Naive thymus-derived CD8-positive, alpha-beta T cell (primary cell): ENCODE measurements at regions of chr1 and their contacts with region 1.

Region 1: GRCh38 chr1:37553927-37554808 is at the start of gene SNIP1:
- DNase-seq: peak; percentile 73 to 96 (median 91)
- ATAC-seq: peak; percentile 95 to 99
- H3K4me3 Mint-ChIP-seq: peak within 1 kb of the TSS; percentile 97 to 100 (median 99)
- H3K27ac Mint-ChIP-seq: peak within 1 kb of the TSS; percentile 95 to 100 (median 98)
- H3K4me1 Mint-ChIP-seq: peaks cover 18 to 46% (median 45%) of the 10 kb centered on the region in 4 donors
- H3K27me3 Mint-ChIP-seq: peaks cover 0 to 10% (median 5%) of the 10 kb centered on the region in 5 donors
- polyA plus RNA-seq, gene SNIP1: 3.6 to 5.5 (median 3.7) TPM

Region 2: GRCh38 chr1:37514350-37515184 is 39.6 kb before region 1 on chr1 and contains the start of gene MEAF6:
- POLR2A ChIA-PET with region 1: interaction called, 27 read pairs
- DNase-seq: peak; percentile 70 to 94 (median 86)
- ATAC-seq: peak; percentile 90 to 91
- H3K4me3 Mint-ChIP-seq: peak within 1 kb of the TSS; percentile 89 to 99 (median 98)
- H3K27ac Mint-ChIP-seq: peak within 1 kb of the TSS; percentile 98 to 100 (median 99)
- H3K4me1 Mint-ChIP-seq: peaks cover 30 to 51% (median 49%) of the 10 kb centered on the region in 4 donors
- H3K27me3 Mint-ChIP-seq: no peaks in the 10 kb centered on the region
- polyA plus RNA-seq, gene MEAF6: 118 to 184 (median 154) TPM

Region 3: GRCh38 chr1:37519613-37520012 is 34.6 kb before region 1 on chr1:
- POLR2A ChIA-PET with region 1: interaction called, 27 read pairs
- DNase-seq: peak in 7 of 10 donors; percentile 9 to 39 (median 34)
- ATAC-seq: peak; percentile 27 to 70
- H3K4me3 Mint-ChIP-seq: peak overlapping the region; percentile 85 to 99 (median 96)
- H3K27ac Mint-ChIP-seq: peak overlapping the region; percentile 85 to 97 (median 94)
- H3K4me1 Mint-ChIP-seq: peaks cover 25 to 42% (median 28%) of the 10 kb centered on the region in 4 donors
- H3K27me3 Mint-ChIP-seq: no peaks in the 10 kb centered on the region